HEK293 (cell line): ENCODE measurements at regions of chr2 and their contacts with region 1.

Region 1: GRCh38 chr2:96276787-96277499 is 10.9 kb downstream of the CIAO1 start:
- H3K4me3 ChIP-seq: no peak overlapping the region
- H3K27ac ChIP-seq: no peak overlapping the region
- H3K4me1 ChIP-seq: no peaks in the 10 kb centered on the region
- CTCF ChIP-seq: no peak

Region 2: DNA sequence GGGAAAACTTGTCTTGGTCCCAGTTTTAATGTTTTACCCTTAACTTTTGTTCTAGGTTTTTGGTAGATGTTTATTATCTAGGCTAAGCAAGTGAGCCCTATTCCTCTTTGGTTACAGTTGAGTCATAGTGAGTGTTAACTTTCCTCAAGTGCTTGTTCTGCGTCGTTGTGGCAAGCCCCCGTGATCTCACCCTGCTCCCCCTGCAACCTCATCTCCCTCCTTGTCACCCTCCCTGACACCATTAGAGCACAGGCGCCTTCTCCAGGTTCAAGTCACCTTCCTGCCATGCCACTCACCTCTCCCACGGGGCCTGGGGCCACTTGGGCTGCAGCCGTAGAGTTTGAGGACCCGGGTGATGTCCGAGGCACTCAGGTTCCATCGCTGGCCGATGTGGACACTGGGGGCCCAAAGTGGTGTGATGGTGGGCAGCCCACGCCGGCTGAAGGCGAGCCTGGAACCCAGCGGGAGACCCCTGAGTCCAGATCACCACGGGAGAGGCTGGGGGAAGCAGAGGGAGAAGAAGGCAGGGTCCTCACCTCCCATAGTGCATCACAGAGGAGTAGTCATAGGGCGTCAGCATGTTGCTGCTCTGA is 147.3 kb before region 1 on chr2:
- CTCF ChIA-PET with region 1: no interaction called
- POLR2A ChIA-PET with region 1: no interaction called
- H3K4me3 ChIP-seq: no peak overlapping the region
- H3K27ac ChIP-seq: no peak overlapping the region
- H3K4me1 ChIP-seq: no peaks in the 10 kb centered on the region
- CTCF ChIP-seq: no peak

Region 3: DNA sequence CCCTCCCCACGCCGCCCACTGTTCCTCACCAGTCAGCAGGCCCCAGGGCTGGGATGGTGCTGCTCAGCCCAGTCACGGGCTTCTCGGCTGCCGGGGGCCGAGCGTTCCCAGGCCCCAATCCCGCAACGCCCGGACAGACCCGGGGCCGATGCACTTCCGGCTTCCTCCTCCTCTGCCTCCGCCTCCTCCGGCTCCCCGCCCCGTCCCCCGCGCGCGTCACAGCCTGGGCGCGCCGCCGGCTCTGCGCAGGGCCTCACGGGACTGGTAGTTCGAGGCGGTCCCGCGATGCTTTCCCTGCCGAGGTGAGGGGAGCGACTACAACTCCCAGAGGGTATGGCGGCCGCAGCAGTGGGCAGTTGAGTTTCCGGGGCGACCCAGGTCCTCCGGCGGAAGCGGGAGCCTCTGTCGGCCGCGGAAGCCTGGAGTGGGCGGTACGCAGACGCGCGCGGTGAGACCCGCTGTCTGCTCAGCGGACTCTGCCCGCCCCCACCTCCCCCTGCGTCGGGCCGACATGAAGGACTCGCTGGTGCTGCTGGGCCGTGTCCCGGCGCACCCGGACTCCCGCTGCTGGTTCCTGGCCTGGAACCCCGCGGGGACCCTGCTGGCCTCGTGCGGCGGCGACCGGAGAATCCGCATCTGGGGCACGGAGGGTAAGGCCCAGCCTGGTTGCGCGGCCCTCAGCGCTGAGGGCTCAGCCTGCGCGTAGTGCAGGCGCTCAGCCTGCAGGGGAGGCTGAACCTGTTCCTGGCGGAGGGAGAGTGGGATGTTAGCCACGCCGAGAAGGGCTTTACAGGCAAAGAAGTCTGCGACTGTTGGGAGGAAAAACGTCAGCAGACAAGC is 10.9 kb before region 1 on chr2 and contains the starts of genes CIAO1 and TMEM127:
- CTCF ChIA-PET with region 1: no interaction called
- POLR2A ChIA-PET with region 1: interaction called, 11 read pairs
- H3K4me3 ChIP-seq: peak within 1 kb of the TSS; percentile 95
- H3K27ac ChIP-seq: peak within 1 kb of the TSS; percentile 73
- H3K4me1 ChIP-seq: 0 out of 2 replicates have a peak, but pooled peaks cover 3% of the 10 kb centered on the region
- CTCF ChIP-seq: peak; percentile 91